ENCODE measurements at regions of chr15 and their contacts with region 1.

Region 1: DNA sequence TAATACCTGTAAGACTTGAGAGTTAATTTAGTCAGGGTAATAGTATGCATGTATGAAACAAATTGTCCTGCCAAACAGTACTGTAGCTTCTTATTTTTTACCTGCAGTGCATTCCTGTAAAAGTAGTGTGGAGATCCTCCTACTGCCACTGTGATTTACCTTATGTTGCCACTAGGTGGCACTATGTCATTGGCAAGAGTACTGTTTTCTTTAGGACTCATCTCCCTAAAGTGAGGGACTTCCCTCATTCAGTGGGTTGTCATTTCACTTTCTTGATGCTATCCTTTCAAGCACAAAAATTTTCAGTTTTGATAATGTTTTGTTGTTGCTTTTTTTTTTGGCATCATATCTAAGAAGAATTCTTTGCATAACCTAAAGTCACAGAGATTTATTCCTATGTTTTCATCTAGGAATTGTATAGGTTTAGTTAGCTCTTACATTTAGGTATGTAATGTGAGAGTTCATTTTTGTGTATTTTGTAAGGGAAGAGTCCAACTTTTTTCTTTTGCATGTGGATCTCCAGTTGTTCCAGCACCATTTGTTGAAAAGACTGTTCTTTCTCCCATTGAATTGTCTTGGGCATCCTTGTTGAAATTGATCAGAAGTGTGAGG is 105.7 kb downstream of the AKAP13 start:
- DNase-seq: peak; percentile 48 to 74 (median 60)
- ATAC-seq: peak; percentile 93
- H3K4me3 ChIP-seq: no peak overlapping the region
- H3K27ac ChIP-seq: no peak overlapping the region
- H3K4me1 ChIP-seq: no peaks in the 10 kb centered on the region
- H3K27me3 ChIP-seq: no peaks in the 10 kb centered on the region
- CTCF ChIP-seq: peak; percentile 56 to 73 (median 71); a peak in 5 of 6 replicates
- EP300 ChIP-seq: no peak
- POLR2A ChIP-seq: no peak
- RAD21 ChIP-seq: peak; percentile 53 to 73

Region 2: DNA sequence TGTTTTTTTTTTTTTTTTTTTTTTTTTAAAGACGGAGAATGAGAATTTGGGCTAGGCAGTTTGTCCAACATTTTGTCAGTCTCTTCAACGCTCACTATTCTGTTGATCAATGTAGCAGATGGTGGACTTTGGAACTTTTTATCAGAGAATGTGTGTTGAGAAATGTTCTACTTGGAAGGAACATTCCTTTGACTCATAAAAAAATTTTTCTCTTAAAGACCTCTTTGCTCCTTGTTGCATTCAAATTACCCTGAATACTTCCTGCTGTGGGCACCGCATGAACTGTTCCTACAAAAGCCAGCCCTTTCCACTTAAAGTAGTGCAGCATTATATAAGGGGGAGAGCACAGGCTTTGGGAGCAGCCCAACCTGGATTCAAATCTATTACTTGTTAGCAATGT is 77.3 kb after region 1 on chr15:
- CTCF ChIA-PET with region 1: no interaction called
- POLR2A ChIA-PET with region 1: no interaction called
- in situ Hi-C with region 1: no loop called
- intact Hi-C with region 1: no loop called
- DNase-seq: no peak
- ATAC-seq: no peak
- H3K4me3 ChIP-seq: no peak overlapping the region
- H3K27ac ChIP-seq: no peak overlapping the region
- H3K4me1 ChIP-seq: no peaks in the 10 kb centered on the region
- H3K27me3 ChIP-seq: no peaks in the 10 kb centered on the region; a peak in 1 of 5 replicates
- CTCF ChIP-seq: no peak
- EP300 ChIP-seq: no peak
- POLR2A ChIP-seq: no peak
- RAD21 ChIP-seq: no peak

Region 3: GRCh38 chr15:85592148-85592547 is 106.1 kb after region 1 on chr15:
- CTCF ChIA-PET with region 1: no interaction called
- POLR2A ChIA-PET with region 1: no interaction called
- in situ Hi-C with region 1: no loop called
- intact Hi-C with region 1: no loop called
- DNase-seq: no peak
- ATAC-seq: no peak
- H3K4me3 ChIP-seq: no peak overlapping the region
- H3K27ac ChIP-seq: no peak overlapping the region
- H3K4me1 ChIP-seq: no peaks in the 10 kb centered on the region
- H3K27me3 ChIP-seq: no peaks in the 10 kb centered on the region
- CTCF ChIP-seq: peak in 1 of 3 experiments; percentile 12; a peak in 1 of 6 replicates
- EP300 ChIP-seq: no peak
- POLR2A ChIP-seq: no peak
- RAD21 ChIP-seq: no peak

Region 4: DNA sequence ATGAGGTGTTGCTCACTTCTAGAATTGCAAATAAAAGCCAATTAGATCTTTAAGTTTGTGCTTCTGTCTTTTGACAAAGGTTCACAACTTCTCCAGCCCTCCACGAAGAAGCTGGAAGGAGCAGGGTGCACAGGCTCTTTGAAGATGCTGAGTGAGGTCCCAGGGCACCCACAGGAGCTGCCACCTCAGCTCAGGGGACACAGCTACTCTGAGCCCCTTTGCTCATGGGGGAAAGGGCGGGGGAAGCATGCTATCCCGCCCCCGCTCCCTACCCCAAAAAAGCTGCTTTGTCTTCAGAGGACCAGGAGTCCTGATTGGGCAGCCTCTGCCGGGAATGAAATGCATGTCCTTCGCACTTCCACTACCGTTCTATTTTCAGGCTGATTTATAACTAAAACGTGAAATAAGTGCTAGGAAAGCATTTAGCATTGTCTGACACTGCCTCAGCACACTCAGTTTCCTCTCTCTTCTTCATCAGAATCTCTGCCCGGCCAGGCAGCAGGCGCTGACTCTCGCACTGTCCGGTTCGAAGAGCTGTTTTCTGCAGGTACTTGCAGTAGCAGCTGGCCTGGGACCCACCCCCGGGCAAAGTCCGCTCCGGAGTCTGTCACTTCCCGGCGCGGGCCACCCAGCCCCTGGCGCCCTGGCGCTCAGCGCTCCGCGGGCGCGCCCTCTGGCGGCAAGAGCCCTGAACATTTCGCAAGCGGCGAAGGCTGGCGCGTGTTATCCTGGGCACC is 354.2 kb after region 1 on chr15:
- CTCF ChIA-PET with region 1: no interaction called
- POLR2A ChIA-PET with region 1: no interaction called
- in situ Hi-C with region 1: loop called (anchors 5 kb)
- intact Hi-C with region 1: loop called (anchors 2 kb)
- DNase-seq: peak; percentile 73 to 77 (median 74)
- ATAC-seq: peak; percentile 100
- H3K4me3 ChIP-seq: no peak overlapping the region
- H3K27ac ChIP-seq: no peak overlapping the region
- H3K4me1 ChIP-seq: peaks cover 0 to 5% of the 10 kb centered on the region in 2 experiments; a peak in 1 of 5 replicates
- H3K27me3 ChIP-seq: no peaks in the 10 kb centered on the region; a peak in 1 of 5 replicates
- CTCF ChIP-seq: peak; percentile 72 to 90 (median 85)
- EP300 ChIP-seq: no peak
- POLR2A ChIP-seq: no peak
- RAD21 ChIP-seq: peak; percentile 62 to 77

Measured in K562 (cell line).